ENCODE measurements at regions of chr17 and their contacts with region 1.

Region 1: GRCh38 chr17:75524953-75525719 is at the start of gene LLGL2:
- DNase-seq: peak; percentile 92
- H3K4me3 ChIP-seq: peak within 1 kb of the TSS; percentile 83
- H3K27ac ChIP-seq: peak within 1 kb of the TSS; percentile 74
- H3K4me1 ChIP-seq: peaks cover 12% of the 10 kb centered on the region
- H3K27me3 ChIP-seq: no peaks in the 10 kb centered on the region
- CTCF ChIP-seq: peak; percentile 43; the same call in 1 of the 2 replicates
- total RNA-seq, gene LLGL2: 10.8 and 14.4 TPM in 2 replicates

Region 2: GRCh38 chr17:75456417-75457046 is 68.6 kb before region 1 on chr17 and contains the start of gene TMEM94:
- CTCF ChIA-PET with region 1: no interaction called
- POLR2A ChIA-PET with region 1: interaction called, 15 read pairs
- intact Hi-C with region 1: no loop called
- DNase-seq: peak; percentile 99
- H3K4me3 ChIP-seq: peak within 1 kb of the TSS; percentile 76
- H3K27ac ChIP-seq: peak within 1 kb of the TSS; percentile 88
- H3K4me1 ChIP-seq: peaks cover 13% of the 10 kb centered on the region
- H3K27me3 ChIP-seq: no peaks in the 10 kb centered on the region
- CTCF ChIP-seq: no peak
- total RNA-seq, gene TMEM94: 67.0 and 84.7 TPM in 2 replicates

Region 3: DNA sequence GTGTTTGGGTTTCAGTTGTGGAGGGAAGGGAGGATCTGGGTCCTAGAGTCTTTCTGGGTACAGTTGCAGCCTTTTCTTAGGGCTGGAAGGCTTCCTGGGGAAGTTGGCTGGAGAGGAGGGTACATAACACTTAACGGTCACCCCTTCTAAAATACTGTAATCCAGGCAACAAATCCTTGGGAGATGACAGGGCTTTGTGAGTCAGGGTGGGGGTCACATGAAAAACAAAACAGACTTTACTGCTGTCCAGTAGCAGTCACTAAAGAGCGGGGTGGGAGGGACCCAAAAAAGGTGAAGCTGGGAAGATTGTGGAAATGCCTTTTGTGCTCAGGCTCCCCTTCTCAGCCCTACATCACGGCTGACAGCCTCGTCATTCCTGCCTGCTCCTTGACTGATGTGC is 148.4 kb after region 1 on chr17:
- CTCF ChIA-PET with region 1: no interaction called
- POLR2A ChIA-PET with region 1: no interaction called
- intact Hi-C with region 1: no loop called
- DNase-seq: no peak
- H3K4me3 ChIP-seq: no peak overlapping the region
- H3K27ac ChIP-seq: no peak overlapping the region
- H3K4me1 ChIP-seq: peaks cover 2% of the 10 kb centered on the region
- H3K27me3 ChIP-seq: no peaks in the 10 kb centered on the region
- CTCF ChIP-seq: no peak

Measured in A673 (cell line).